B cell (primary cell): ENCODE measurements at regions of chr5 and their contacts with region 1.

Region 1: GRCh38 chr5:91280362-91281269 is 102.5 kb downstream of the ARRDC3 start:
- DNase-seq: peak; percentile 87
- ATAC-seq: peak; percentile 83
- H3K4me3 ChIP-seq: peak overlapping the region; percentile 52 to 95 (median 68)
- H3K4me3 Mint-ChIP-seq: peak overlapping the region; percentile 90
- H3K27ac ChIP-seq: no peak overlapping the region
- H3K27ac Mint-ChIP-seq: peak overlapping the region; percentile 84
- H3K4me1 ChIP-seq: peaks cover 11 to 20% of the 10 kb centered on the region in 2 donors
- H3K4me1 Mint-ChIP-seq: peaks cover 21% of the 10 kb centered on the region
- H3K27me3 ChIP-seq: peaks cover 0 to 6% (median 3%) of the 10 kb centered on the region in 4 experiments
- H3K27me3 Mint-ChIP-seq: peaks cover 7% of the 10 kb centered on the region
- CTCF ChIP-seq: no peak

Region 2: DNA sequence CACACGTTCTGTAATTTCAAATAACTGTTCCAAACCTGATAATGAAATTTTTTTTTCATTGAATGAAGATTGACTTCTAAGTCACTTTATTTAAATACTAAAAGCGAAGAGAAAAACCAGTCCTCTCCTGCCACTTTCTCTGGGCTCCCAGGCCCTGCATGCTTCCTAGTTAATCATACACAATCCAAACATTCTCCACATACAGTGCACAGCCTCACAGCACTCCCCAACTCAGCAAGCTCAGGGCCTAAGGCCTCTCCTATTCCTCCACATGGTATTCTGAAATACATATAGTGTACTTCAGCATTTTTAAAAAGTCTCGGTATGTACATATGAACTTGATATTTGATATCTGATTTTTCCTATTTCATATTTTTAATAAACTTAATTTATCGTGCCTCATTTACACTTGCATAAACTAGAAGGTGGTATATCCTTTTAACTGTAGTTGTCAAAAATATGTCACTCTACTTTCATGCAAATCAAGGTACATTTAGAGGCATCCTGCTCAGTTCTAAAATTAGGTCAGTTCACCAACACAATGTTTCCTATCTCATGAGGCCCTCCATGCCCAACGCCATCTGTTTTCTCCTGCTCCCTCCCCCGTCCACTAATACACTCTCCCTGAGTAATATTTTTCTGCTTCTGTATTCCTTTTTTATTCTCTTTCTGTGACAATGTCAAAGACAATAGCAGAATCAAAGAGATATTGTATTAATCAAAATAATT is 104.2 kb before region 1 on chr5:
- CTCF ChIA-PET with region 1: no interaction called
- POLR2A ChIA-PET with region 1: no interaction called
- intact Hi-C with region 1: no loop called
- DNase-seq: no peak
- ATAC-seq: no peak
- H3K4me3 ChIP-seq: no peak overlapping the region
- H3K4me3 Mint-ChIP-seq: no peak overlapping the region
- H3K27ac ChIP-seq: no peak overlapping the region
- H3K27ac Mint-ChIP-seq: no peak overlapping the region
- H3K4me1 ChIP-seq: no peaks in the 10 kb centered on the region
- H3K4me1 Mint-ChIP-seq: peaks cover 4% of the 10 kb centered on the region
- H3K27me3 ChIP-seq: no peaks in the 10 kb centered on the region
- H3K27me3 Mint-ChIP-seq: peaks cover 3% of the 10 kb centered on the region
- CTCF ChIP-seq: no peak

Region 3: GRCh38 chr5:91311697-91312501 is 31.3 kb after region 1 on chr5:
- CTCF ChIA-PET with region 1: interaction called, 5 read pairs
- POLR2A ChIA-PET with region 1: interaction called, 7 read pairs
- intact Hi-C with region 1: loop called (anchors 1 kb)
- DNase-seq: peak; percentile 72
- ATAC-seq: peak; percentile 88
- H3K4me3 ChIP-seq: peak overlapping the region in 1 of 5 experiments; percentile 63
- H3K4me3 Mint-ChIP-seq: peak overlapping the region; percentile 77
- H3K27ac ChIP-seq: peak overlapping the region; percentile 46 to 67
- H3K27ac Mint-ChIP-seq: peak overlapping the region; percentile 89
- H3K4me1 ChIP-seq: peaks cover 36 to 37% of the 10 kb centered on the region in 2 donors
- H3K4me1 Mint-ChIP-seq: peaks cover 47% of the 10 kb centered on the region
- H3K27me3 ChIP-seq: no peaks in the 10 kb centered on the region
- H3K27me3 Mint-ChIP-seq: no peaks in the 10 kb centered on the region
- CTCF ChIP-seq: no peak

Region 4: GRCh38 chr5:91357012-91357813 is 76.6 kb after region 1 on chr5:
- CTCF ChIA-PET with region 1: no interaction called
- POLR2A ChIA-PET with region 1: no interaction called
- intact Hi-C with region 1: loop called (anchors 1 kb)
- DNase-seq: no peak
- ATAC-seq: no peak
- H3K4me3 ChIP-seq: no peak overlapping the region
- H3K4me3 Mint-ChIP-seq: no peak overlapping the region
- H3K27ac ChIP-seq: no peak overlapping the region
- H3K27ac Mint-ChIP-seq: peak overlapping the region; percentile 32
- H3K4me1 ChIP-seq: peaks cover 35 to 36% of the 10 kb centered on the region in 2 donors
- H3K4me1 Mint-ChIP-seq: peaks cover 39% of the 10 kb centered on the region
- H3K27me3 ChIP-seq: no peaks in the 10 kb centered on the region
- H3K27me3 Mint-ChIP-seq: no peaks in the 10 kb centered on the region
- CTCF ChIP-seq: no peak